Endothelial cell of umbilical vein (primary cell): ENCODE measurements at regions of chr5 and their contacts with region 1.

Region 1: GRCh38 chr5:52799983-52800393 is 12.3 kb downstream of the ITGA1 start:
- DNase-seq: peak; percentile 96
- H3K4me3 ChIP-seq: peak overlapping the region; percentile 66 to 90 (median 69)
- H3K27ac ChIP-seq: peak overlapping the region; percentile 57
- H3K4me1 ChIP-seq: peaks cover 25% of the 10 kb centered on the region
- H3K27me3 ChIP-seq: no peaks in the 10 kb centered on the region
- CTCF ChIP-seq: no peak
- POLR2A ChIP-seq: peak; percentile 69

Region 2: GRCh38 chr5:52380385-52380784 is 419.6 kb before region 1 on chr5:
- CTCF ChIA-PET with region 1: no interaction called
- POLR2A ChIA-PET with region 1: no interaction called
- dilution Hi-C with region 1: no loop called
- intact Hi-C with region 1: no loop called
- DNase-seq: no peak
- H3K4me3 ChIP-seq: no peak overlapping the region
- H3K27ac ChIP-seq: no peak overlapping the region
- H3K4me1 ChIP-seq: no peaks in the 10 kb centered on the region
- H3K27me3 ChIP-seq: no peaks in the 10 kb centered on the region
- CTCF ChIP-seq: no peak
- POLR2A ChIP-seq: no peak

Region 3: DNA sequence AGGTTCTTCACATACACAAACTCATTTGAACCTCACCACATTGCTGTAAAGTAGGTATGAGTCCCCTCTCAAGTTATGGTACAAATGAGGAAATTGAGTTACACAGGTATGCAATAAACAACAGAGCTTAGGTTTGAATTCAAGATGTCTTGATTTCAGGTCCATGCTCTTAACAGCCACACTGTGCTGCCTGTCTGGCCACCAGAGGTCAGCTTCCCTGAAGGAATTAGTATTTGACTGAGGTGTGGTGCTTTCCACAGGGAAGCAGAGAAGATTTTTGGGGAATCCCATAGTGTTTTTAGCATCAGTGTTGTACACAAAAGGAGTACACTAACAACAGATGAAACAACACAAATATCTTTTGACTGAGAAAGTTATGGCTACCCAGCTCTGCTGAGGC is 106.7 kb before region 1 on chr5:
- CTCF ChIA-PET with region 1: interaction called, 71 read pairs
- POLR2A ChIA-PET with region 1: no interaction called
- dilution Hi-C with region 1: no loop called
- intact Hi-C with region 1: loop called (anchors 1 kb)
- DNase-seq: peak; percentile 56
- H3K4me3 ChIP-seq: no peak overlapping the region
- H3K27ac ChIP-seq: no peak overlapping the region
- H3K4me1 ChIP-seq: no peaks in the 10 kb centered on the region
- H3K27me3 ChIP-seq: peaks cover 2% of the 10 kb centered on the region in 2 experiments
- CTCF ChIP-seq: peak; percentile 52 to 64
- POLR2A ChIP-seq: no peak

Region 4: DNA sequence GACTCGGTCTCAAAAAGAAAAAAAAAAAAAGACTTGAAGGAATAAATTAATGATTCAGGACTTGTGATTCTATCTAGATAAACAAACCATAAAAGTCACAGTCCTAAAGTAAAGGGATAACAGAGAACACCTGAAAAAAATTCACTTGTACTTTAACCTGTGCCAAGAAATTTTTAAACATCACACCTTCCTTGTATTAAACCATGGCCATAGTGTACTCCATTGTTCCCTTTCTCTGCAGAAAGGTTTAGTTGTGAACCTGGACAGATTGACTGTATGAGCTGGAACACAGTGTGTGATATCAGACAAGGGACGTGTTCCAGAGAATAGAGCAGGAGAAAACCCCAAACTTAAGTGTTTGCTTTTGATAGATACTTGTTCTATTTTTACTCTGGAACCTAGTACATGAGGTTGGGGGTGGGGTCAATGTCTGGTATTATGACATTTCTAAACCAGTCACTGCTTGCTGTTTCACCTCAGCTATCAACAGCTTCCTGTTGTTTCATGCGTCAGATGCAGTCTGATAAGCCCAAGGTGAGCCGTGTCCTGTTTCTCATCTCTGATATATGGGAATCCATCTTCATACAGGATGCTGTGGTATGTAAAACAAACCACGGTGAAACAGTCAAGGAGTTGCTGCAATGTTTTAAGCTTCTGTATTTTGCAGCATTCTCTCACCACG is 74.8 kb before region 1 on chr5:
- CTCF ChIA-PET with region 1: interaction called, 7 read pairs
- POLR2A ChIA-PET with region 1: interaction called, 3 read pairs
- dilution Hi-C with region 1: no loop called
- intact Hi-C with region 1: loop called (anchors 1 kb)
- DNase-seq: no peak
- H3K4me3 ChIP-seq: no peak overlapping the region
- H3K27ac ChIP-seq: peak overlapping the region; percentile 34
- H3K4me1 ChIP-seq: peaks cover 34% of the 10 kb centered on the region
- H3K27me3 ChIP-seq: no peaks in the 10 kb centered on the region
- CTCF ChIP-seq: no peak
- POLR2A ChIP-seq: no peak

Region 5: GRCh38 chr5:52811067-52811749 is 11.2 kb after region 1 on chr5:
- CTCF ChIA-PET with region 1: interaction called, 32 read pairs
- POLR2A ChIA-PET with region 1: no interaction called
- dilution Hi-C with region 1: no loop called
- intact Hi-C with region 1: no loop called
- DNase-seq: no peak
- H3K4me3 ChIP-seq: no peak overlapping the region
- H3K27ac ChIP-seq: no peak overlapping the region
- H3K4me1 ChIP-seq: peaks cover 12% of the 10 kb centered on the region
- H3K27me3 ChIP-seq: no peaks in the 10 kb centered on the region
- CTCF ChIP-seq: no peak
- POLR2A ChIP-seq: no peak

Region 6: GRCh38 chr5:52844885-52845284 is 44.9 kb after region 1 on chr5:
- CTCF ChIA-PET with region 1: interaction called, 4 read pairs
- POLR2A ChIA-PET with region 1: no interaction called
- dilution Hi-C with region 1: no loop called
- intact Hi-C with region 1: loop called (anchors 2 kb)
- DNase-seq: peak; percentile 68
- H3K4me3 ChIP-seq: no peak overlapping the region
- H3K27ac ChIP-seq: no peak overlapping the region
- H3K4me1 ChIP-seq: peaks cover 11% of the 10 kb centered on the region
- H3K27me3 ChIP-seq: no peaks in the 10 kb centered on the region
- CTCF ChIP-seq: no peak
- POLR2A ChIP-seq: no peak

Region 7: GRCh38 chr5:52893863-52894262 is 93.9 kb after region 1 on chr5:
- CTCF ChIA-PET with region 1: no interaction called
- POLR2A ChIA-PET with region 1: no interaction called
- dilution Hi-C with region 1: no loop called
- intact Hi-C with region 1: no loop called
- DNase-seq: no peak
- H3K4me3 ChIP-seq: no peak overlapping the region
- H3K27ac ChIP-seq: no peak overlapping the region
- H3K4me1 ChIP-seq: peaks cover 5% of the 10 kb centered on the region
- H3K27me3 ChIP-seq: no peaks in the 10 kb centered on the region
- CTCF ChIP-seq: no peak
- POLR2A ChIP-seq: no peak

Region 8: DNA sequence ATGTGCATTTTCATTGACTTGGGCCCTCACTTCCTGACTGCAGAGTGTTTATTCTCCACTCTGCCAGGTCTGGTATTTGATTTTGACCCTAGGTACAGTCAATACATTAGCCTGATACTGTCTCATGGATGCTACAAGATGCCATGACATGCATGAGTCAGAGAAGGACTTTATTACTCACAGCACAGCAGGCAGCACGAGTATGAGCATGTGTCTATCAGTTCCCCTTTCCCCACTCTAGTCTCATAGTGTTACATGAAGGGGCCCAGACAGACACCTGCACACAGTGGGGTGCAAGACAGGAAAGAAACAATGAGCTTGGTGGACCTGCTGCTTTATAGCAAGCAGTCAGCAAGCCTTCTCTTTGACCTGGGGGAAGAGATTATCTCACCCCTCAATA is 208.8 kb after region 1 on chr5:
- CTCF ChIA-PET with region 1: no interaction called
- POLR2A ChIA-PET with region 1: no interaction called
- dilution Hi-C with region 1: no loop called
- intact Hi-C with region 1: no loop called
- DNase-seq: peak; percentile 43
- H3K4me3 ChIP-seq: no peak overlapping the region
- H3K27ac ChIP-seq: peak overlapping the region; percentile 38
- H3K4me1 ChIP-seq: peaks cover 53% of the 10 kb centered on the region
- H3K27me3 ChIP-seq: no peaks in the 10 kb centered on the region
- CTCF ChIP-seq: no peak
- POLR2A ChIP-seq: peak; percentile 13

Region 9: DNA sequence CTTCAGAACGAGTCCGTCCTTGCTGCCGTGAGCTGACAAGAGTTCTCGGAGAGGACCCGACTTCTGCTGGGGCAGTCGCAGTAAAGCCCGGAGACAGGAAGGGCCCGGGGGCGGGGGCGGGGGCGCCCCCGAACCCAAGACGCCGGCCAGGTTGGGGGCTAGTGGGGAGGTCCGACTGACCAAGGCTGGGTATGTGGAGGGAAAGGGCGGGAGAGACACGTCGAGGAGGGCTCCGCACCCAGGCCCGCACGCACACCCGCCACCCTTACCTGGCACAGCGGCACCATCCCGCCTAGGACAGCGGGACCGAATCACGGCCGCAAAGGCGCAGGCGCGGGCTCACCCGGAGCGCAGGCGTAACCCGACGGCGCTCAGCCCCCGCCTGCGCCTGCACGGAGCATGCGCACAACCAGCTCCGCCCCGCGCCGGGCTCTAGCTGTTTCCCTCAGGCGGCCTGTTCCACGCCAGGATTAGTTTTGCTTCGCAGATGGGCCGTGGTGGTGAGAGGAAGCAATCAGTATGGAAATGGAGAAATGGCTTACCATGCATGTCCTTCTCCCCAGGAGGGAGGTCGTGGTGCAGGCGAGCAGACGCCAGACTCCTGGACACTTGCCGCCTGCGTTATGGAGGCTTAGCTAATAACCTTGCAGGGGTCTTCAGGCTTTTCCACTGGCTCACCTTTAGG is 309.6 kb after region 1 on chr5 and contains the start of gene MOCS2:
- CTCF ChIA-PET with region 1: no interaction called
- POLR2A ChIA-PET with region 1: no interaction called
- dilution Hi-C with region 1: no loop called
- intact Hi-C with region 1: loop called (anchors 1 kb)
- DNase-seq: peak; percentile 94
- H3K4me3 ChIP-seq: peak within 1 kb of the TSS; percentile 67 to 88 (median 71)
- H3K27ac ChIP-seq: no peak within 1 kb of the TSS
- H3K4me1 ChIP-seq: peaks cover 16% of the 10 kb centered on the region
- H3K27me3 ChIP-seq: no peaks in the 10 kb centered on the region
- CTCF ChIP-seq: no peak
- POLR2A ChIP-seq: peak; percentile 96
- total RNA-seq, gene MOCS2: 31.1 and 31.5 TPM in 2 replicates